OCI-LY7 (cell line): ENCODE measurements at regions of chr6 and their contacts with region 1.

Region 1: GRCh38 chr6:98601716-98602115 is 232.7 kb upstream of the POU3F2 start:
- DNase-seq: no peak
- H3K4me3 ChIP-seq: no peak overlapping the region
- H3K27ac ChIP-seq: no peak overlapping the region
- H3K4me1 ChIP-seq: no peaks in the 10 kb centered on the region
- CTCF ChIP-seq: no peak

Region 2: GRCh38 chr6:98452685-98453084 is 149.0 kb before region 1 on chr6:
- CTCF ChIA-PET with region 1: no interaction called
- POLR2A ChIA-PET with region 1: no interaction called
- intact Hi-C with region 1: no loop called
- DNase-seq: no peak
- H3K4me3 ChIP-seq: no peak overlapping the region
- H3K27ac ChIP-seq: no peak overlapping the region
- H3K4me1 ChIP-seq: no peaks in the 10 kb centered on the region
- CTCF ChIP-seq: no peak

Region 3: GRCh38 chr6:98586163-98586562 is 15.6 kb before region 1 on chr6:
- CTCF ChIA-PET with region 1: no interaction called
- POLR2A ChIA-PET with region 1: no interaction called
- intact Hi-C with region 1: no loop called
- DNase-seq: no peak
- H3K4me3 ChIP-seq: no peak overlapping the region
- H3K27ac ChIP-seq: no peak overlapping the region
- H3K4me1 ChIP-seq: no peaks in the 10 kb centered on the region
- CTCF ChIP-seq: no peak

Region 4: DNA sequence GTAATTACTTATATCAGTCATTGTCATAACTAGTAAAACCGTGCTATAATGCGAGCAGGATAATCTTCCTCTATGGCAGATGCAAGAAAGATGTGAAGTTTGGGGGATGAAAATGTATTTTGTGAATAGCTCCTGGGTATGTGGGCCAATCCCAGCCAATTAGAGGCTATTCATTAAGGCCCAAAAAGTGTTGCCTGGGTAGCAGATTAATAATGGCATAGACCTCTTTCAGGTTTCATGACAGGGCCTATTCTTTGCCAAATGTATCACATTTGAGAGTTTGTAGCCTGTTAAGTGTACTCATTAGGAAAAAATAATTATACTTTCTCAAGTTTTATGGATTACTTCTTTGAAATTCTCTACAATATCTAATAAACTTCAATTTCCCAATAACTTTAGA is 33.5 kb after region 1 on chr6:
- CTCF ChIA-PET with region 1: no interaction called
- POLR2A ChIA-PET with region 1: no interaction called
- intact Hi-C with region 1: loop called (anchors 1 kb)
- DNase-seq: no peak
- H3K4me3 ChIP-seq: no peak overlapping the region
- H3K27ac ChIP-seq: no peak overlapping the region
- H3K4me1 ChIP-seq: no peaks in the 10 kb centered on the region
- CTCF ChIP-seq: no peak

Region 5: GRCh38 chr6:98678481-98678880 is 76.8 kb after region 1 on chr6:
- CTCF ChIA-PET with region 1: no interaction called
- POLR2A ChIA-PET with region 1: no interaction called
- intact Hi-C with region 1: no loop called
- DNase-seq: no peak
- H3K4me3 ChIP-seq: no peak overlapping the region
- H3K27ac ChIP-seq: no peak overlapping the region
- H3K4me1 ChIP-seq: no peaks in the 10 kb centered on the region
- CTCF ChIP-seq: no peak

Region 6: GRCh38 chr6:98716341-98716740 is 114.6 kb after region 1 on chr6:
- CTCF ChIA-PET with region 1: no interaction called
- POLR2A ChIA-PET with region 1: no interaction called
- intact Hi-C with region 1: no loop called
- DNase-seq: no peak
- H3K4me3 ChIP-seq: no peak overlapping the region
- H3K27ac ChIP-seq: no peak overlapping the region
- H3K4me1 ChIP-seq: no peaks in the 10 kb centered on the region
- CTCF ChIP-seq: no peak